Sigmoid colon (tissue), 7 donors: ENCODE measurements at regions of chr11 and their contacts with region 1.

Region 1: GRCh38 chr11:17077520-17078401 is at the start of gene RPS13:
- DNase-seq: peak; percentile 99
- H3K4me3 ChIP-seq: peak within 1 kb of the TSS; percentile 81 to 93 (median 86)
- H3K27ac ChIP-seq: peak within 1 kb of the TSS; percentile 86 to 96 (median 94)
- H3K4me1 ChIP-seq: peaks cover 0 to 33% (median 25%) of the 10 kb centered on the region in 4 donors
- H3K27me3 ChIP-seq: no peaks in the 10 kb centered on the region
- CTCF ChIP-seq: no peak
- EP300 ChIP-seq: peak in 1 of 4 donors; percentile 83
- POLR2A ChIP-seq: peak; percentile 62 to 70
- total RNA-seq, gene RPS13: 1,670 to 3,514 (median 2,481) TPM

Region 2: GRCh38 chr11:16738193-16738946 is 339.4 kb before region 1 on chr11 and contains the start of gene C11orf58:
- intact Hi-C with region 1: loop called (anchors 5 kb)
- DNase-seq: peak; percentile 96
- H3K4me3 ChIP-seq: peak within 1 kb of the TSS; percentile 58 to 87 (median 74)
- H3K27ac ChIP-seq: peak within 1 kb of the TSS; percentile 86 to 95 (median 92)
- H3K4me1 ChIP-seq: peaks cover 0 to 45% (median 41%) of the 10 kb centered on the region in 4 donors
- H3K27me3 ChIP-seq: no peaks in the 10 kb centered on the region
- CTCF ChIP-seq: no peak
- EP300 ChIP-seq: no peak
- POLR2A ChIP-seq: peak; percentile 80 to 81
- total RNA-seq, gene C11orf58: 136 to 222 (median 178) TPM

Region 3: DNA sequence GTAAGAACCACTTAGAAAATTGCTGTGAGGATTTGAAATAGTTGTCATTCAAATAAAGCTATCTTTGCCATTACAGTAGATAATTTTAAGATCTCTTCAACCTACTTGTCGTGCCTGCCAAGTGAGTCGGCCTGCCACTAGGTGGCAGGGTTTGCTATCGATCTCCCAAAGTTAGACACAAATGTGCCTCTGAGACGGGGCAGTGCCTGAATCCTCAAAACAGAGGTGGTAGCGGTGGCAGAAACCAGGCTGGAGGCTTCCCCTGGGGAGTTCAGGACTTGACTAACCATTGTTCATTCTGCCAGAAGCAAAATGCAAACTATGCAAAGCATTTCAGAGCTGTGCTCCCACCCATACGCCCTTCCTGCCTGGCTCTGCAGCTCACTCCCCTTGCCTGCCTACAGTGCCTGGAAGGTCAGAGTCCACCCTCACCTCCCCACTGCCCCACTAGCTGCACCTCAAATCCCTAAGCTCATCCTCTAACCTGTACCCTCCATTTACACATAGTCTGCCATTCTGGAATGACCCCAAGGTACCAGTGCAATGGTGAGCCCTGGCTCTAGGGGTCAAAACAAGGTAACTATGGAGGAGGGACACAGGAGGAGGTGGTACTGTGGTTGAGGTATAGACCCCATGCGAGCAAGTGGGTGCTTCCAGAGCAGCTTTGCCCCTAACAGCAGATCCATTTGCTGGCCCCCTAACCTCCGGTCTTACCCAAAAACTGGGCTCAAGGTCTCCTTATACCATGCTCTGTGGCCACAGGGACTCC is 257.3 kb before region 1 on chr11:
- intact Hi-C with region 1: loop called (anchors 5 kb)
- DNase-seq: peak; percentile 83
- H3K4me3 ChIP-seq: no peak overlapping the region
- H3K27ac ChIP-seq: no peak overlapping the region
- H3K4me1 ChIP-seq: peaks cover 0 to 10% (median 6%) of the 10 kb centered on the region in 4 donors
- H3K27me3 ChIP-seq: no peaks in the 10 kb centered on the region
- CTCF ChIP-seq: peak; percentile 5 to 77 (median 66)
- EP300 ChIP-seq: no peak
- POLR2A ChIP-seq: no peak

Region 4: DNA sequence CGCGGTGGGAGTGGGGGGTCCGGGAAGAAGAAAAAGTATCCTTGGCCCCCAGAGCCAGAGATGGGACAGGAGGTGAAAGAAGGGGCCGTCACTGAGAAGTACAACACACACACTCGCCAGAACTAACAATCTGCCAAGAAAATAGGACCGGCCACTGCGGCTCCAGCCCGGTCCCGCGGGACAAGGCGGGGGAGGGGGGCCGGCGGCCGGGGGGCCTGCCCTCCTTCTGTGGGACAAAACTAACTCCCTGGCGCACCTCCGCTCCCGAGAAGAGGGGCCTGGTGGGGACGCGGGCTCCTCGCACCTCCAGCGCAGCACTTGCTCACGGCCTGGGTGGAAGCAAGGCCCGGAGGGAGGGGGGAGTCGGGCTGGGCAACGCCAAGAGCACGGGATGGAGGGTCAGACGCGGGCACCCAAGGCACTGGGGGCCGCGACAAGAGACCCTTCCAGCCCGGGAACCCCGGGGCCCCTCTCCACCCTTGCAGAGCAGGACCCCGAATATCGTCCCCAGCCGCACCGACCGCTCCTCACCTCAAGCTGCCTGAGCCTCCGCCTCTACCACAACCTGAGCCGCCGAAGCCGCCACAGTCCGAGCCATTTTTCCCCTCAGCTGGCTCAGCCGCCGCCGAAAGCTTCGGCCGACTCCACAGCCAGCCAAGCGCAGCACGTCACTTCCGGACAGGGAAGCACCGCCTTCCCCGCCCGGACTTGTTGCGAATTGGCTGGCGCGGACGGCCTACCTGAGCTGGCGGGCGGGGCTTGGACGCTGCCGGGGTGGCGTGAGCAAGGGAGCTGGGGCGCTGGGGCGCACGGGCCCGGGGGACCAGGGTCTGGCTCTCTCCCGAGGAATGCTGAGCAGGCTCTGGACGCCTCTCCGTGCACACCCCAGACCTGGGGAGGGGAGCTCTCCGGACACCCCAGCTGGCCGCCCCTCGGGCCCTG is 129.8 kb after region 1 on chr11 and contains the start of gene PIK3C2A:
- intact Hi-C with region 1: loop called (anchors 5 kb)
- DNase-seq: peak; percentile 98
- H3K4me3 ChIP-seq: peak within 1 kb of the TSS; percentile 69 to 96 (median 80)
- H3K27ac ChIP-seq: peak within 1 kb of the TSS; percentile 90 to 98 (median 94)
- H3K4me1 ChIP-seq: peaks cover 0 to 27% (median 18%) of the 10 kb centered on the region in 4 donors
- H3K27me3 ChIP-seq: no peaks in the 10 kb centered on the region
- CTCF ChIP-seq: no peak
- EP300 ChIP-seq: no peak
- POLR2A ChIP-seq: peak; percentile 90 to 94
- total RNA-seq, gene PIK3C2A: 52.9 to 72.6 (median 65.7) TPM

Region 5: DNA sequence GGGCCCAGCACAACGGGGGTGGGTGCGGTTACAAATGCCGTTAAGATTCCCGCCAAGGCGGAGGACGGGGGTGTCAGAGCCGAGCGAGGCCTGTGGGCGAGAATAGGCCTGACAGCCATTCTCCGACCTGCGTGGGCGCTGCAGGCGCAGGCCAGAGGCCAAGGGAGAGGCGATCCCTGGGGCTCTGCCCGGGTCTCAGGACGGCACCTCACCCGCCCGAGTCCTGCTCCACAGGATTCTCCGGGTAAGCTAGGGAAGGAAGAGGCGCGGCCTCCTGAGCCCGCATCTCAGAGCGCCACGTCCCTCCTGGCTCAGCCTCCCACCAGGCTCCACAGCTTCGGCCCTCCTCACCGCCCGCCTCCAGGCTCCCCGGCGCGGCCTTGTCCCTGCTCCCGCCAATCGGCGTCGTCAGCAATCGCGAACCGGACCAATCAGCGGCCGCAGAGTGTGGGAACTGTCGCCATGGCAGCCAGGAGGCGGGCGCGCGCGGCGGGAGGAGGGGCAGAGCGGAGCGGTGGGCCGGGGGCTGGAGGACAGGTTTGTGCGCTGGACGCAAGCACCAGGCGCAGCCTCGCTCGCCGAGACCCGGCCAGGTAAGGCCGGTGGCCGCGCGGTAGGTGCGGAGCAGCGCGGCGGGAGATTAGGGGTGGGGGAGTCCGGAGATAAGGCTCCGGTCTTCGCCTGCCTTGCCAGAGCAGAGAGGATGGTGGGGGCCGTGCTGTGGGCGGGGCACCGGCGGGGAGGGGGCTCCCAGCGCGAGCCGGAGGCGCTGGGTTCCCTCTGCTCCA is 198.7 kb after region 1 on chr11 and contains the start of gene NUCB2:
- intact Hi-C with region 1: loop called (anchors 5 kb)
- DNase-seq: peak; percentile 98
- H3K4me3 ChIP-seq: peak within 1 kb of the TSS; percentile 71 to 99 (median 88)
- H3K27ac ChIP-seq: peak within 1 kb of the TSS; percentile 89 to 96 (median 93)
- H3K4me1 ChIP-seq: peaks cover 0 to 8% (median 4%) of the 10 kb centered on the region in 4 donors
- H3K27me3 ChIP-seq: no peaks in the 10 kb centered on the region
- CTCF ChIP-seq: no peak
- EP300 ChIP-seq: no peak
- POLR2A ChIP-seq: peak; percentile 30 to 35
- total RNA-seq, gene NUCB2: 38.3 to 45.1 (median 39.4) TPM

Region 6: DNA sequence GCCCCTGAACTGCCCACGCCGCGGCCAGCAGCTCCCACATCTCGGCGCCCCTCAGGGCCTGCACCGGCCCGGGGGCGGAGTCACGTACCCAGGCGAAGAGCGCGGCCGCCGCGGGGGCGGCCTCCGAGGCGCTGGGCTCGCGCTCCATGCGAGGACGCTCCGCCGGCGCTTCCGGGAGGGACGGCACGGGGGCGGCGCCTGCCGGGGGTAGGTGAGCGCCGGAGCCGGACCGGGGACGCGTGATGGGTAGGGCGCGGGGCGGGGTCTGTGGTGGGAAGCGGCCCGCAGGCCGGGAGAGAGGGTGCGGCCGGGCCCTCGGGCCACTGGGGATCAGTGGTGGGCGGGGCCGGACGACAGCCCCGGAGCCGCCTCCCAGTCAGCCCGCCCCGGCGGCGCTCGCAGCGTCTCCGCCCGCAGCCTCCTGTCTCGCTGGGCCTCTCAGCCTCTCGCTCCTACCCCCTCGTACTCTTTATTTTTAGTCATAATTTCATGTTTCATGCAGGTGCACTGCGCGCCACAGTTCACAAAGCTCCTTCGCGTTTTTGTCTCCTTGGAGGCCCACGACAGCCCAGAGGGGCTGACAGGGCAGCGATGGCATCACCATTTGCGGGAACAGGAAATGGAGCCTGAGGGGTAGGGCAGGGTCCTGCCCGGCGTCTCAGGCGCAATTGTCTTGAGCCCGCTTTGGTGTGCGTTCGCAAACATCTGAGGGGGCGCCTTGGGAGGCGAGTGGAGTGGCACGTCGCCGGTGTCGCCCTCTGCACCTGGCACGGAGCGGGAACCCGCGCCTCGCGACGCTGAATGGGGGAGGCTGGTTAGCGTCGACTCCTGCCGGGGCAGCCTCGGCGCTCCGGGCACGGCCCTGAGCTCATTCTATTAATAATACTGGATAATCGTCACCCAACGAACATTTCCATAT is 935.4 kb after region 1 on chr11 and contains the start of gene SERGEF:
- intact Hi-C with region 1: loop called (anchors 10 kb)
- DNase-seq: peak; percentile 95
- H3K4me3 ChIP-seq: peak within 1 kb of the TSS; percentile 60 to 91 (median 76)
- H3K27ac ChIP-seq: peak within 1 kb of the TSS; percentile 84 to 89 (median 86)
- H3K4me1 ChIP-seq: peaks cover 0 to 16% (median 9%) of the 10 kb centered on the region in 4 donors
- H3K27me3 ChIP-seq: no peaks in the 10 kb centered on the region
- CTCF ChIP-seq: peak in 1 of 4 experiments; percentile 10
- EP300 ChIP-seq: no peak
- POLR2A ChIP-seq: peak; percentile 58 to 80
- total RNA-seq, gene SERGEF: 28.8 to 50.4 (median 44.6) TPM